ENCODE measurements at regions of chr6 and their contacts with region 1.

Region 1: DNA sequence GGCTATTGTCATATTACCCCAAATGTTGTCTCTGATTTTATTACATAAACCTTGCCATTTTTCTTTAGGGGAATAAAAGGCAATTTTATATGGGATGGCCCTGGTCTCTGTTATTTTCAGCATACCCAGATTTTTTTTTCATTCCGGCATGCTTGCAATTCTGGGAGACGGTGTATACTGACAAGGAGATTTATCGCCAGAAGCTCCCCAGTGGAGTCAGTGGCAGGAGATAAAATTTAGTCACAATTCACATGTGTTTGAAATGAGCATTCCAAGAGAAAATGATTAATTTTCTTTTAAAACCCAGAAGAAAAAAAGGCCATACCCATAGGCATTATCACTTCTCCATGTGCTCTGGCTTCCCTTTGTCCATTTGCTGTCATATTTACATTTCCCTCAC is 250.8 kb upstream of the RSPO3 start:
- DNase-seq: no peak
- H3K4me3 ChIP-seq: no peak overlapping the region
- H3K4me3 Mint-ChIP-seq: no peak overlapping the region
- H3K27ac Mint-ChIP-seq: no peak overlapping the region
- H3K4me1 ChIP-seq: no peaks in the 10 kb centered on the region
- H3K4me1 Mint-ChIP-seq: no peaks in the 10 kb centered on the region
- H3K27me3 ChIP-seq: no peaks in the 10 kb centered on the region
- H3K27me3 Mint-ChIP-seq: no peaks in the 10 kb centered on the region
- CTCF ChIP-seq: no peak

Region 2: GRCh38 chr6:126803769-126804168 is 63.9 kb before region 1 on chr6:
- CTCF ChIA-PET with region 1: no interaction called
- POLR2A ChIA-PET with region 1: no interaction called
- intact Hi-C with region 1: no loop called
- DNase-seq: no peak
- H3K4me3 ChIP-seq: no peak overlapping the region
- H3K4me3 Mint-ChIP-seq: no peak overlapping the region
- H3K27ac Mint-ChIP-seq: no peak overlapping the region
- H3K4me1 ChIP-seq: peaks cover 44% of the 10 kb centered on the region
- H3K4me1 Mint-ChIP-seq: peaks cover 30% of the 10 kb centered on the region
- H3K27me3 ChIP-seq: no peaks in the 10 kb centered on the region
- H3K27me3 Mint-ChIP-seq: no peaks in the 10 kb centered on the region
- CTCF ChIP-seq: no peak

Region 3: GRCh38 chr6:126926926-126927325 is 59.3 kb after region 1 on chr6:
- CTCF ChIA-PET with region 1: no interaction called
- POLR2A ChIA-PET with region 1: no interaction called
- intact Hi-C with region 1: loop called (anchors 5 kb)
- DNase-seq: no peak
- H3K4me3 ChIP-seq: no peak overlapping the region
- H3K4me3 Mint-ChIP-seq: no peak overlapping the region
- H3K27ac Mint-ChIP-seq: no peak overlapping the region
- H3K4me1 ChIP-seq: no peaks in the 10 kb centered on the region
- H3K4me1 Mint-ChIP-seq: no peaks in the 10 kb centered on the region
- H3K27me3 ChIP-seq: no peaks in the 10 kb centered on the region
- H3K27me3 Mint-ChIP-seq: no peaks in the 10 kb centered on the region
- CTCF ChIP-seq: no peak

Region 4: DNA sequence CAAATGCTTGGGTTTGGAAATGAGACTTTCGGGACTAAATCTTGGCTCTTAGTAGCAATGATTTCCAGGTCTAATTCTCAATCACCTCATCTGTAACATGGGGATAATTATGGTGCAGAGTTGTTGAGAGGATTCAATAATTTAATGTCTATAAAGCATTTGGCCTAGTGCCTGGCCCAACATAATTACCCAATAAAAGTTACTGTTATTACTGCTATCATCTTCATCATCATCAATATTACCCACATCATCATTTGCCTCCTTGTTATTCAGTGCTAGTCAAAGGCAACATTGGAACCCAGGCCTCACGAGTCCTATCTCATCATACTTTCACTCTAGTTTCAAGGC is 216.3 kb after region 1 on chr6:
- CTCF ChIA-PET with region 1: no interaction called
- POLR2A ChIA-PET with region 1: no interaction called
- intact Hi-C with region 1: loop called (anchors 5 kb)
- DNase-seq: no peak
- H3K4me3 ChIP-seq: no peak overlapping the region
- H3K4me3 Mint-ChIP-seq: no peak overlapping the region
- H3K27ac Mint-ChIP-seq: no peak overlapping the region
- H3K4me1 ChIP-seq: peaks cover 16% of the 10 kb centered on the region
- H3K4me1 Mint-ChIP-seq: peaks cover 27% of the 10 kb centered on the region
- H3K27me3 ChIP-seq: no peaks in the 10 kb centered on the region
- H3K27me3 Mint-ChIP-seq: peaks cover 2% of the 10 kb centered on the region
- CTCF ChIP-seq: no peak